ENCODE measurements at regions of chr4 and their contacts with region 1.

Region 1: DNA sequence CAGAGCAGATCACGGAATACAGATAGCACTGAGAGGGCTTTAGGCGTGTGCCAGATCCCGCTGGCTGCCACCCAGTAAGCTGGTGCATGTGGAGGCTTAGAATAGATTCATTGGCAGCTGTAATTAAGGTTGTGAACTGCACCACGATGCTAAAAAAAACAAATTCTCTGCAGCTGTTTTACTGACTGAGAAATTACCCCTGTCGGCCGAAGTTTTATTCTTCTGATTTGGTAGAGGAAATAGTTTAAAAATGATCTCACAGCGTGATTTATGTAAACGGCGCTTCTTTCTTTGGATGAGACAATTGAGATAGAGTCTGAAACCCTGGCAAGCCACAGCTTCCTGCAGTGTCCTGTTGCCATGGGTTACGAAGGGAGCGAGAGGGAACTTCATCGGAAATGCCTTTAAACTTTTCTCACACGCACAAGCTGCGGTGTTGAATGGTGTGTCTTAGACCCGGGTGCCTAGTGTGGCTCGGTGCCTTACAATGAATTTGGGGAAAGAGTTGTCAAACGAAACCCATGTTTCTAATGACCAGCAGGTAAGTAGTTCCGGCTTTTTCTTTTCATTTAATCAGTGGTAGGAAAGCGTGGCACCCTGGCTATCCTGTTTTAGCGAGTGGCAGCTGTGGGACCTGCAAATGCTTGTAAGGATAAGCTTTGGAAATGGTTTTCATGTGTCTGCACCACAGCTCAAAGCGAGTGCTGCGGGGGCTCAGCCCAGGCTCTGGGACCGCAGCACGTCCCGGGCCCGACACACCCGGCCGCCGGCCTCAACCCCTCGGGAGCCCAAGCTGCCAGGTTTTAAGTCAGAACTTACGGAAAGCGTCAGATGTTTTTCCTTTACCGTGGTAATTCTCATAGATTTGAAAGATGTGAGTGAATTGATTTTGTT is 71.7 kb upstream of the HGFAC start:
- DNase-seq: peak in 1 of 2 donors; percentile 82
- ATAC-seq: peak; percentile 22
- H3K4me3 ChIP-seq: peak overlapping the region in 1 of 2 donors; percentile 24
- H3K27ac ChIP-seq: no peak overlapping the region
- H3K4me1 ChIP-seq: no peaks in the 10 kb centered on the region
- H3K27me3 ChIP-seq: no peaks in the 10 kb centered on the region

Region 2: DNA sequence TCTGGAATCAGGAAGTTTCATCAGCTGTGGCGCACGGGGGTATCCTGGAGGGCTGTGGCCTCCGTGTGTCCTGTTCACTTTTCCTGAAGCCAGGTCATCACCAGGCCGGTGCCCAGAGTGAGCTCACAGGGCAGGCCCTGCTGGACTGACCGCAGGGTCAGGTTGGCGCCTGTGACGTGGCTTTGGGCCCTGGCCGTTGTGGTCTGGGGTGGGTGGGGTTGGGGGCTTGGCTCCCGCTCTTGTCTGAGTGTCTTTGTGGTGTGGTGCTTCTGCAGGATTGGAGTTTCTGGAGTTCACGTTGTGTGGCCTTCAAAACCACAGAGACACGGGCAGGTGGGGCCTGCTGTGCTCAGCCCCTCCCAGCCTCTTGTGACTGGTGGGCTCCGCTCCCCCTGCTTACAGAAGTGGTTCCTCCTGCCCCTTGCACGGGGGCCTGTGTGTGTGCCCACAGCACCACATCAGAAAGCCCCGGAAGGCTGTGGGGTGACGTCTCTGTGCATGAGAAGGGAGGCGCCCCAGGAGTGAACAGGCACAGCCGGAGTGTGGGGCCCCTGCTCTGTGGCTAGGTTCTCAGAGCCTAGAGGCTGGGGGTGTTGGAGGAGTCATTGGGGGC is 67.7 kb before region 1 on chr4:
- intact Hi-C with region 1: no loop called
- DNase-seq: peak; percentile 50 to 75
- ATAC-seq: no peak
- H3K4me3 ChIP-seq: no peak overlapping the region
- H3K27ac ChIP-seq: no peak overlapping the region
- H3K4me1 ChIP-seq: no peaks in the 10 kb centered on the region
- H3K27me3 ChIP-seq: no peaks in the 10 kb centered on the region

Region 3: DNA sequence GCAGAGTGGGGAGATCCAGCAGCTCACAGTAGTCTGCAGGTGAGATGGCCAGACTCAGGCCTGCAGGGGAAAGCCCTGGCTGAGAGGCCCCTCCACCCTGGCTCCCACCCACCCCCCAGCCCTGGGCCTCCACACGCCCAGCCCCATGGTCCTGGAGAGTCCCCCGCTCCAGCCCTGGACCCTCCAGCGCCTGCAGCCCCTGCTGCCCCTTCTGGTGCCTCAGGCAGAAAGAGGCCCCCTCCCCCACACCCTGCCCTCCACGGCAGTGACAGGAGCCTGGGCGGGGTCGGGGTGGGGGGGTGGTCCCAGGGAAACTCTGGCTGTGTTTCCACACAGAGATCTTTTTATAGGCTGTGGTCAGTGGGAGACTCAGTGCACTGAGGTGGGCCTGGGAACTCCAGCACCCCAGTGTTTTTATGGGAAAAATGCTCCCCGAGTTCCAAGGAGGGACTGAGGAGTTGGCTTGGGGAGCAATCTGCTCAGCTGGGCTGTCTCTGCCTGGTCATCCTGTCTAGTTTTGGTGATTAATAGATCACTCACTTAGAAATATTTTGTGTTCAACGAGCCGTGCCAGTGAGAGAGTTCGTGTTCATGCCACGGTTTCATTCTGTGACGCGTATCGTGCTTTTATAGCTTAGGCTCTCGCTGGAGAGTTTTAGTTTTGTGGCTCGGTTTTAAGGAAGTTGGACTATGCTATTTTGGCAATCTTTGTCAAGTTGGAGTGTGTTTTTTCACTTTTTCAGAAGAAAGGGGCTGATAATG is 18.6 kb after region 1 on chr4:
- intact Hi-C with region 1: loop called in 1 of 2 experiments (anchors 2 kb)
- DNase-seq: peak in 1 of 2 donors; percentile 76
- ATAC-seq: peak; percentile 55
- H3K4me3 ChIP-seq: no peak overlapping the region
- H3K27ac ChIP-seq: peak overlapping the region; percentile 34 to 72
- H3K4me1 ChIP-seq: no peaks in the 10 kb centered on the region
- H3K27me3 ChIP-seq: no peaks in the 10 kb centered on the region

Region 4: GRCh38 chr4:3408793-3409330 is 38.8 kb after region 1 on chr4:
- intact Hi-C with region 1: loop called in 1 of 2 experiments (anchors 5 kb)
- DNase-seq: peak in 1 of 2 donors; percentile 61
- ATAC-seq: no peak
- H3K4me3 ChIP-seq: no peak overlapping the region
- H3K27ac ChIP-seq: no peak overlapping the region
- H3K4me1 ChIP-seq: no peaks in the 10 kb centered on the region
- H3K27me3 ChIP-seq: no peaks in the 10 kb centered on the region

Measured in aorta (tissue), 5 donors.